ENCODE measurements at regions of chr5 and their contacts with region 1.

Region 1: DNA sequence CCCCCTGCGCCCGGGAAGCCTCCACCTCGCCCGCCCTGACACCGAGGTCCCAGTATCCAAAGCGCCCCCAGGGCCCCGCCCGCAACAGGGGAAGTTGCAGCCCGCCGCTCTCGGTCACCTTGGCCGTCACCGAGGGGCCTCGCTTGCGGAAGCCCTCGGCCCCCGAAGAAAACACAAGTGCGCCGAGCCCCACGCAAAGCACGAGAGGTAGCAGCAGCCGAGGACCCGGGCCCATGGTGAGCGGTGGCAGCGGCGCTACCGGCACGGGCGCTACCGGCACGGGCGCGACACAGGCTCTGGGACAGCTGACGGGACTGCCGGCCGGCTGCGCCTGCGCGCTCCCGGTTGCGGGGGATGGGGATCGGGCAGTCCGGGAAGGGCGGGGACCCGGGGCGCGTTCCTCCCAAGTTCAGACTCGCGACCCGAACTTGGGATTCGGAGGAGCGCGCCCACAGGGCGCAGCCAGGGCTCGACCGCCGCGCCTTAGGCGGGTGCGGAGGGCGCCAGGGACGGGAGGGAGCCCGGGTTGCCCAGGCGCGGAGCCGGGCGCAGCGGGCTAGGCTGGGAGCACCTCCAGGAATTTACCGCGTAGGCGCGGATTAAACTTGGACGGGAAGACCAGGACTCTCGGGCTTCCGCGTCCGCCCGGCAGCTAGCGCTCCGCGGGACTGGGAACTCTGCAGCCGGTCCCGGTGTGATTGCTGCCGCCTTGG is at the start of gene PPIC:
- DNase-seq: peak; percentile 83
- H3K4me3 ChIP-seq: peak within 1 kb of the TSS; percentile 74 to 86
- H3K27ac ChIP-seq: peak within 1 kb of the TSS; percentile 83 to 91
- H3K4me1 ChIP-seq: no peaks in the 10 kb centered on the region
- H3K27me3 ChIP-seq: no peaks in the 10 kb centered on the region
- CTCF ChIP-seq: no peak
- POLR2A ChIP-seq: peak; percentile 59
- total RNA-seq, gene PPIC: 11.5 to 20.9 TPM

Region 2: GRCh38 chr5:122845229-122846050 is 191.1 kb before region 1 on chr5 and contains the start of gene SNX24:
- intact Hi-C with region 1: loop called (anchors 10 kb)
- DNase-seq: peak; percentile 71
- H3K4me3 ChIP-seq: peak within 1 kb of the TSS; percentile 90 to 94
- H3K27ac ChIP-seq: peak within 1 kb of the TSS; percentile 81 to 90
- H3K4me1 ChIP-seq: no peaks in the 10 kb centered on the region
- H3K27me3 ChIP-seq: no peaks in the 10 kb centered on the region
- CTCF ChIP-seq: peak in 1 of 4 experiments; percentile 3
- POLR2A ChIP-seq: peak; percentile 9
- total RNA-seq, gene SNX24: 9.8 to 13.3 TPM

Region 3: DNA sequence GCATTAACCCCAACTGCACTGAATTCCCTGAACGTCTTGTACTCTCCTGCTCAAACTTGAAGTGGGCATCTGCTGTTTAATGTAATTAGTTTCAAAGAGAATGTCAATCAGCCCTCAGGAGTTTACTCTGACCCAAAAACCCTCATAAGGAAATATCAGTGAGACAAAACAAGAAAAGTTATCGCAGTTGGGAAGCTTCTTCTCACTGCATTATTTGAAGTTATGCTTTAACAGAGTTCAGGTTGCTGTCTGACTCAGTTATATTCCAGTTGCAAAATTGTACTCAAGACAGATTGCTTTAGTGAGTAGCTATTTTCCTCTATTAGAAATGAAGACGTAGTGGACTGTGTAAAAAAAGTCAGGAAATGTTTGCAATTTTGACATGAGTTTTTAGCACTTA is 52.1 kb before region 1 on chr5:
- intact Hi-C with region 1: no loop called
- DNase-seq: no peak
- H3K4me3 ChIP-seq: no peak overlapping the region
- H3K27ac ChIP-seq: no peak overlapping the region
- H3K4me1 ChIP-seq: no peaks in the 10 kb centered on the region
- H3K27me3 ChIP-seq: no peaks in the 10 kb centered on the region
- CTCF ChIP-seq: no peak
- POLR2A ChIP-seq: no peak

Region 4: DNA sequence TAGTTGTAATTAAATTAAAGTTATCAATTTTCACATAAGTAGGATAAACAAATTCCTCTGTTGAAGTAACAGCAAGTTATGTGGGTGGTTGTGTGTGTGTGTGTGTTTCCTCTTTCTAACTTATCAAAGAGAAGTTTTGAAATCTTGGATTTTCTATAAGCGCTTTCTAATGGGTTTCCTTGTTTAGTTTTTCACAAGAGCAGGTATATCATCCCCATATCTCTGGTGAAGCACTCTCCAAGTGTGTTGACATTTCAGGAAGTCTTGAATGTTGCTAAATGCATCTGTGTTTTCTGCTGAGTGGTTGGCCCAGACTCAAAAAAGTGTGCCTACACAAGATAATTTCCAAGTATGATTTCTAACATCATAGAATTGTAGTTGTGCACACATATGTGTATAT is 95.8 kb after region 1 on chr5:
- intact Hi-C with region 1: no loop called
- DNase-seq: no peak
- H3K4me3 ChIP-seq: no peak overlapping the region
- H3K27ac ChIP-seq: no peak overlapping the region
- H3K4me1 ChIP-seq: no peaks in the 10 kb centered on the region
- H3K27me3 ChIP-seq: no peaks in the 10 kb centered on the region
- CTCF ChIP-seq: no peak
- POLR2A ChIP-seq: no peak

Region 5: DNA sequence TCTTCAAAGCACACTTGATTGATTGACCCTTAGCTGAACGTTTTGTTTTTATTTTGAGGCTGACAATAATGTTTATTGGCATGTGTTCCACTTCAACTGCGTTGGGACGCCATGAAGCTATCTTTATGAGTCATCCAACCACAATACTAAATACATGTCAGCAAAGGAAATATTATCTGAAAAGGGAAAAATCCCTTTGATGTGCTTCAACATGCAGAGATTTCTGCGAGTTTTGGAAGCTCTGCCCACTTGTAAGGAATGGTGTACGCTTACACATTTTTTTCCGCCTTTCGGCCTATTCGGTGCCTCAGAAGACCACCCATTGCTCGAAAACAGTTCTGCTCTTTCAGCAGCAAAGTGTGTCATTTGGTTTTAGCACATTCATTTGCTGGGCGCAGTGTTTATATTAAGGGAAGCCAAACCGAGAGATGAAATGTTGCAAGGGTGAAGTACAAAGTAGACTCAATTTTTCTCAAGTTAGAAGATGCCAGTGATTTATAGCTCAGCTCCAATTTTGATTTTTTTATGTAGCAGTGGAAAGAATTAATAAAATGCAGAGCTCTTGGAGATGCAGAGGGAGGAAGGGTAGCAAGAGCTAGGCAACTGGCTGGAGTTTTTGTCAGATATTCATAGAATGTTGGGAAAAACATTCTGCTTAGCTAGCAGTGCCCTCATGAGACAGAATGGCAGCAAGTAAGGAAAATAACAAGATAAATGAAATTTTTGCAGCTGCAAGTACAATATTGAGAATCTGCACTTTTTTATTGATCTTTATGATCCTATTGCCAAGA is 121.4 kb after region 1 on chr5:
- intact Hi-C with region 1: loop called (anchors 5 kb)
- DNase-seq: no peak
- H3K4me3 ChIP-seq: no peak overlapping the region
- H3K27ac ChIP-seq: peak overlapping the region in 1 of 2 donors; percentile 38
- H3K4me1 ChIP-seq: peaks cover 2% of the 10 kb centered on the region
- H3K27me3 ChIP-seq: no peaks in the 10 kb centered on the region
- CTCF ChIP-seq: no peak
- POLR2A ChIP-seq: no peak

Region 6: GRCh38 chr5:123367739-123368138 is 331.2 kb after region 1 on chr5:
- intact Hi-C with region 1: loop called (anchors 10 kb)
- DNase-seq: no peak
- H3K4me3 ChIP-seq: no peak overlapping the region
- H3K27ac ChIP-seq: no peak overlapping the region
- H3K4me1 ChIP-seq: no peaks in the 10 kb centered on the region
- H3K27me3 ChIP-seq: no peaks in the 10 kb centered on the region
- CTCF ChIP-seq: peak in 1 of 4 experiments; percentile 35
- POLR2A ChIP-seq: no peak

Region 7: GRCh38 chr5:123647066-123647465 is 610.5 kb after region 1 on chr5:
- intact Hi-C with region 1: no loop called
- DNase-seq: no peak
- H3K4me3 ChIP-seq: no peak overlapping the region
- H3K27ac ChIP-seq: no peak overlapping the region
- H3K4me1 ChIP-seq: no peaks in the 10 kb centered on the region
- H3K27me3 ChIP-seq: no peaks in the 10 kb centered on the region
- CTCF ChIP-seq: no peak
- POLR2A ChIP-seq: no peak

Measured in prostate gland (tissue), 2 donors.